ENCODE measurements at regions of chr2 and their contacts with region 1.

Region 1: DNA sequence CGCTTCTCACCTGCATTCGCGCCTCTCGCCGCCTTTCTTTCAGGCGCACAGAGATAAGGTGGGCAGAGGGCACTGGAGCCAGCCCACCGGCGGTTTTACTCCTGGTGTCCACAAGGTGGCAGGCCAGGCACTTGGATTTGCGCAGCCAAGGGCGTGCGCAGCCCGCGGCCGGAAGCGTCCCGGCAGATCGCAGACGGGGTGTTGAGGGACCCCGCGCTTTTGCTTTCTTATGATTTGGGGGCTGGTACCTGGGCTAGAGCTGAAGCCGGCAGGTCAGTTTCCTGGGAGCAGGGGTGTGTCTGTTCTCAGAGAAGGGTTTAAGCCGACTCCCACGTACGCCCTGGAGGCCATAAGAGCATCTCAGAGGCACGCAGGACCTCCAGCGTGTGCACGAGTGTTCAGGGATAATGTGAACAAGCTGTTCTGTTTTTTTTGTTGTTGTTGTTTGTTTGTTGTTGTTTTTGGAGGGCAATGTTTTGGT is 305.6 kb upstream of the CXCR4 start:
- DNase-seq: peak; percentile 46 to 73
- ATAC-seq: peak; percentile 86 to 95 (median 92)
- H3K4me3 ChIP-seq: peak overlapping the region in 9 of 10 donors; percentile 6 to 65 (median 45)
- H3K27ac ChIP-seq: no peak overlapping the region
- H3K4me1 ChIP-seq: peaks cover 0 to 11% (median 7%) of the 10 kb centered on the region in 9 donors
- H3K27me3 ChIP-seq: peaks cover 0 to 40% (median 28%) of the 10 kb centered on the region in 7 donors
- CTCF ChIP-seq: peak; percentile 71 to 90 (median 86)

Region 2: GRCh38 chr2:135494917-135495316 is 928.6 kb before region 1 on chr2:
- intact Hi-C with region 1: loop called in 1 of 10 experiments (anchors 5 kb)
- DNase-seq: no peak
- ATAC-seq: no peak
- H3K4me3 ChIP-seq: no peak overlapping the region
- H3K27ac ChIP-seq: no peak overlapping the region
- H3K4me1 ChIP-seq: peaks cover 0 to 7% (median 0%) of the 10 kb centered on the region in 9 donors
- H3K27me3 ChIP-seq: no peaks in the 10 kb centered on the region
- CTCF ChIP-seq: no peak

Region 3: DNA sequence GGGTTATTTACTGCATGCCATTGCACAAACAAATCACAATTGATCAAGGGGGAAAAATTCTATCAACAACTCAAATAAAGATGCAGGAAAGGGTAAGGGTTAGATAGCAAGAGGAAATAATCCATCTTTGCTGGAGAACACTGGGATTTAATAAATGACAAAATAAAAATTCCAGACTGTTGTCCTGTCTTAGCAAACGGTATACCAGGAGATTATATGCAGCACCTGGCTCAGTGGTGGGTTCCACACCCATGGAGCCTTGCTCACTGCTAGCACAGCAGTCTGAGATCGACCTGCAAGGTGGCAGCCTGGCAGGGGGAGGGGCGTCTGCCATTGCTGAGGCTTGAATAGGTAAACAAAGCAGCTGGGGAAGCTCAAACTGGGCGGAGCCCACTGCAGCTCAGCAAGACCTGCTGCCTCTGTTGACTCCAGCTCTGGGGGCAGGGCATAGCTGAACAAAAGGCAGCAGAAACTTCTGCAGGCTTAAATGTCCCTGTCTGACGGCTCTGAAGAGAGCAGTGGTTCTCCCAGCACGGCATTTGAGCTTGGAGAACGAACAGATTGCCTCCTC is 45.3 kb after region 1 on chr2:
- intact Hi-C with region 1: no loop called
- DNase-seq: no peak
- ATAC-seq: no peak
- H3K4me3 ChIP-seq: no peak overlapping the region
- H3K27ac ChIP-seq: no peak overlapping the region
- H3K4me1 ChIP-seq: no peaks in the 10 kb centered on the region
- H3K27me3 ChIP-seq: peaks cover 0 to 13% (median 0%) of the 10 kb centered on the region in 7 donors
- CTCF ChIP-seq: no peak

Region 4: DNA sequence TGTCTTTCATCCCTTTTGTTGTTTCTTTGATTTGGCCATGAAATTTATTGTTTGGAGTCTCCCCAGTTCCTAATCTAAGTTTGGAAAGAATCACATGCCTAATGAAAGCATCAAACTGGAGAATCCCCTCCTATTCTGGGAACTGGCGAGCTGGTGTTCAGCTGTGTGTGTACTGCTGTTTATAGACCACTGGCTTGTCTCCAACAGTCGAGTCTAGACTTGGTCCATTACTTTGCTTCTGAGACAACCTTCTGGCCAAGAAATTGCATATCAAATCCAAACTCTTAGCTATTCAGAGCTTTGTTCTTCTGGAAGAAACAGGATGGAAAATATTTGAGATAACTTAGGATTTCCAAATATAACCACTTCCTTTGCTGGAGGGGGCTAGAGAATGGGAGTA is 230.3 kb after region 1 on chr2:
- intact Hi-C with region 1: loop called in 1 of 10 experiments (anchors 10 kb)
- DNase-seq: peak in 1 of 2 donors; percentile 67
- ATAC-seq: peak; percentile 69 to 95 (median 86)
- H3K4me3 ChIP-seq: no peak overlapping the region
- H3K27ac ChIP-seq: peak overlapping the region in 3 of 10 donors; percentile 11 to 47 (median 32)
- H3K4me1 ChIP-seq: peaks cover 0 to 25% (median 13%) of the 10 kb centered on the region in 9 donors
- H3K27me3 ChIP-seq: no peaks in the 10 kb centered on the region
- CTCF ChIP-seq: peak in 1 of 9 donors; percentile 15

Region 5: DNA sequence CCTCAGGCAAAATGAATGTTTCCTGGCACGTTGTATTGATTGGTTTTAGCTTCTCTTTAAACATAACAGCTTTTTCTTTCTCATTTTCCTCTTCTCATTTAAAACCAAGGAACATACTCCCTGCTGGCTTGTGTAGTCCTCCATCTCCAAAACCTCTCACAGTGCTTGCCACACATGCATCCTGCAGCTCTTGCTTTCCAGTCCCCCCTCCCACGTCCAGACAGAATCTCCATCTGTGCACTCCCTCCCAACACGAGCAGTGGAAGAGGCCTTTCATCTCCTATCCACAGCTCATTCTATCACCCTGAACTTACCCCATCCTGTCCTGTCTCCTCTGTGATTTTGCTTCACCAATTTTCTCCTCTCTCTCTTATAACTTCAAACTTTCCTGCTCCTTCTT is 242.2 kb after region 1 on chr2:
- intact Hi-C with region 1: loop called in 5 of 10 experiments (anchors 10 kb)
- DNase-seq: no peak
- ATAC-seq: peak in 1 of 8 donors; percentile 25
- H3K4me3 ChIP-seq: no peak overlapping the region
- H3K27ac ChIP-seq: no peak overlapping the region
- H3K4me1 ChIP-seq: no peaks in the 10 kb centered on the region
- H3K27me3 ChIP-seq: no peaks in the 10 kb centered on the region
- CTCF ChIP-seq: no peak

Region 6: GRCh38 chr2:136738044-136738443 is 314.5 kb after region 1 on chr2:
- intact Hi-C with region 1: loop called in 7 of 10 experiments (anchors 2 to 10 kb)
- DNase-seq: no peak
- ATAC-seq: no peak
- H3K4me3 ChIP-seq: no peak overlapping the region
- H3K27ac ChIP-seq: no peak overlapping the region
- H3K4me1 ChIP-seq: peaks cover 0 to 4% (median 0%) of the 10 kb centered on the region in 9 donors
- H3K27me3 ChIP-seq: peaks cover 0 to 8% (median 0%) of the 10 kb centered on the region in 7 donors
- CTCF ChIP-seq: no peak

Measured in heart right ventricle (tissue), 16 donors.